ENCODE measurements at regions of chr17 and their contacts with region 1.

Region 1: DNA sequence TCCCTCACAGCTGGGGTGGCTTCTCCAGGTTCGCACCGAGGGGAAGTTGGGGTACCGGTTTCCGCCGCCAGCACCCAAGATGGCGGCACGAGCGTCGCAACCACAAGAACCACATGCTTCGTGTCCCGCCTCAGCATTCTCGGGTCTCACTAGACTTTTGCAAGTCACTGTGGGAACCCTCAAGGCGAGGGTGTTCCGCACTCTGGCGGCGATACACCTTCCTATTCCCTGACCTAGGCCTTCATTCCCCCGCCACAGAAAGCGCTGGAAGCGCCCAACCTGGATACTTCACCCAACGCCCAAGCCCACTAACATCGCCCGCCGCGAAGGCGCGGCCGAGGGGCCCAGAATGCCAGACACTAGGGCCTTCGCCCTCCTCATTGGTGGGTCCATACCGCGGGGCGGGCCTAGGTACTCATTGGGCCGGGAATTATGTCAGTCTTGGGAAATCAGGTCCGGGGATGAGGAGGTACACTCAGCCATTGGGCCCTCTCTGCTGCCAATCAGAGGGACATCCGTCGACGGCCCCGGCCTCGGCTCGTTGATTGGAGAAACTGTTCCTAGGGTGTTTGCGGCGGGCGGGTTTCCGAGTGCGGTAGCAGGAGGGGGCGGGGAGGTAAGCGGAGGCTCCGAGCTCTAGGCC is at the start of gene NFE2L1:
- DNase-seq: peak; percentile 98
- H3K27ac ChIP-seq: peak within 1 kb of the TSS; percentile 99
- CTCF ChIP-seq: no peak

Region 2: GRCh38 chr17:47905221-47905781 is 142.6 kb before region 1 on chr17:
- CTCF ChIA-PET with region 1: no interaction called
- POLR2A ChIA-PET with region 1: no interaction called
- DNase-seq: no peak
- H3K27ac ChIP-seq: peak overlapping the region; percentile 93
- CTCF ChIP-seq: no peak

Region 3: DNA sequence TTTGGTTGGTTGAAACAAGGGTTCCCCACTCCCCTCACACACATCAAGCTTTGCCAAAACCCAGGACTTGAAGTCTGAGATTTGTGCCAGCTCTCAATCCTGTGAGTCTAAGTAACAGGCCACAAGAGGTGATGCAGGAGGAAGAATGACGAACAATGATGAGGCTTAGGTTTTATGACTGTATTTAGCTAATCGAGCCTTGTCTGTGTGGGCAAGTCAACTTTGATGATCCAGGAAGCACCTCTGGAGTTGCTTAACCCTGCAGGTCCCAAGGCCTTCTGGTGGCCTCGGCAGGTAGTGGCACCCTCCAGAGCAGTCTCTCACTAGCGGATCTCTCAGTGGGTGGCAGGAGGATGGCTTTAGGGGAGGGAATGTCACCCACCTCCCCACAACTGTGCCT is 48.3 kb before region 1 on chr17:
- CTCF ChIA-PET with region 1: no interaction called
- POLR2A ChIA-PET with region 1: no interaction called
- DNase-seq: peak; percentile 14
- H3K27ac ChIP-seq: no peak overlapping the region; the same call in 1 of the 2 replicates
- CTCF ChIP-seq: no peak

Region 4: DNA sequence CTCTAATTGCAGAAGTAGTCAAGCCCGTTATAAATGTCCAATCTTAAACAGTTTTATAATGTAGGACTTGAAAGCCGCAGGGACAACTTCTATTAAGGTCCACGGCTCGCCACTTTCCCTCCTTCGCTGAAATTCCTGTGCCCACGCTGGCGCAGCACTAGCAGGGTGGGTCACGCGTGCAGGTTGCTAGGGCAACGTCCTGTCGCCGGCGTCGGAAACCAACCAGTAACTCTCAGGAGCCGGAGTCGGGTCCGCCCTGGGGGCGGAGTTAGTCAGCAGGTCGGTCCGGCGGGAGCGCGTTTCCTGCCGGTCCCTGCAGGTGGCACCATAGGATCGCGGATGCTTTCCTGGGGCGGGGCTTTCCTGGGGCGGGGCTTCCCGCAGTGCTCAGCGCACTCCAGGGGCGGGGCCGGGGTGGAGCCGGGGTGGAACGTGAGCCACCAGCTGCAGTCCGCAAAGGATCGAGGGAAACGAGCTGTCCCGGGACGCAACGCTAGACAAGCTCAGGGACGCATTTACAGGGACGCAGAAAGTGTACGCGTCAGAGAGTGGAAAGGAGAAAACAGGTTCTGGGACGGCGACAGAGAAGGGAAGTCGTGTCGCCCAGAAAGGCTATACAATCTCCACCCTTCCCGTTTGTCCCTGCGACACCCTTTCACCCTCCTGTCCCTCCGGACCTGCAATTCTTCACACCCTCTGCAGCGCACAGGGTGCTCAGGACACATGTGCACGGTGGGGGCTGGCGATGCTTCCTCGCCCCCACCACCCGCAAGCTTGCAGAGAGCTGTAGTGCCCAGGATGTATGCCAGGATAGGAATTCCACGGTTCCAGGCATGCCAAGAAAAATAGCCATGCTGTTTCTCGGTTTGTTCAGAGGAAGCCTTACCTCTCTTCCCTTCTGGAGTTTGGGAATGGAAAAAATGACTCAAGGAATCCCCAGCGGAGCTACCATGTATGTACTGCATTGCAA is 22.6 kb before region 1 on chr17:
- CTCF ChIA-PET with region 1: interaction called, 20 read pairs
- POLR2A ChIA-PET with region 1: interaction called, 10 read pairs
- DNase-seq: peak; percentile 94
- H3K27ac ChIP-seq: peak overlapping the region; percentile 98
- CTCF ChIP-seq: peak; percentile 93

Region 5: GRCh38 chr17:48037036-48037837 is 10.6 kb before region 1 on chr17 and contains the start of gene COPZ2:
- CTCF ChIA-PET with region 1: interaction called, 11 read pairs
- POLR2A ChIA-PET with region 1: interaction called, 5 read pairs
- DNase-seq: no peak
- H3K27ac ChIP-seq: peak within 1 kb of the TSS; percentile 77
- CTCF ChIP-seq: no peak; the same call in 1 of the 2 replicates

Region 6: DNA sequence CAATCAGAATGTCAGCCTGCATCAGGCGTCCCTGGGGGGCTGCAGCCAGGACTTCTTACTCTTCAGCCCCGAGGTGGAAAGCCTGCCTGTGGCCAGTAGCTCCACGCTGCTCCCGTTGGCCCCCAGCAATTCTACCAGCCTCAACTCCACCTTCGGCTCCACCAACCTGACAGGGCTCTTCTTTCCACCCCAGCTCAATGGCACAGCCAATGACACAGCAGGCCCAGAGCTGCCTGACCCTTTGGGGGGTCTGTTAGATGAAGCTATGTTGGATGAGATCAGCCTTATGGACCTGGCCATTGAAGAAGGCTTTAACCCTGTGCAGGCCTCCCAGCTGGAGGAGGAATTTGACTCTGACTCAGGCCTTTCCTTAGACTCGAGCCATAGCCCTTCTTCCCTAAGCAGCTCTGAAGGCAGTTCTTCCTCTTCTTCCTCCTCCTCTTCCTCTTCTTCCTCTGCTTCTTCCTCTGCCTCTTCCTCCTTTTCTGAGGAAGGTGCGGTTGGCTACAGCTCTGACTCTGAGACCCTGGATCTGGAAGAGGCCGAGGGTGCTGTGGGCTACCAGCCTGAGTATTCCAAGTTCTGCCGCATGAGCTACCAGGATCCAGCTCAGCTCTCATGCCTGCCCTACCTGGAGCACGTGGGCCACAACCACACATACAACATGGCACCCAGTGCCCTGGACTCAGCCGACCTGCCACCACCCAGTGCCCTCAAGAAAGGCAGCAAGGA is 10.7 kb after region 1 on chr17:
- CTCF ChIA-PET with region 1: interaction called, 4 read pairs
- POLR2A ChIA-PET with region 1: interaction called, 10 read pairs
- DNase-seq: no peak
- H3K27ac ChIP-seq: peak overlapping the region; percentile 99
- CTCF ChIP-seq: no peak

Region 7: DNA sequence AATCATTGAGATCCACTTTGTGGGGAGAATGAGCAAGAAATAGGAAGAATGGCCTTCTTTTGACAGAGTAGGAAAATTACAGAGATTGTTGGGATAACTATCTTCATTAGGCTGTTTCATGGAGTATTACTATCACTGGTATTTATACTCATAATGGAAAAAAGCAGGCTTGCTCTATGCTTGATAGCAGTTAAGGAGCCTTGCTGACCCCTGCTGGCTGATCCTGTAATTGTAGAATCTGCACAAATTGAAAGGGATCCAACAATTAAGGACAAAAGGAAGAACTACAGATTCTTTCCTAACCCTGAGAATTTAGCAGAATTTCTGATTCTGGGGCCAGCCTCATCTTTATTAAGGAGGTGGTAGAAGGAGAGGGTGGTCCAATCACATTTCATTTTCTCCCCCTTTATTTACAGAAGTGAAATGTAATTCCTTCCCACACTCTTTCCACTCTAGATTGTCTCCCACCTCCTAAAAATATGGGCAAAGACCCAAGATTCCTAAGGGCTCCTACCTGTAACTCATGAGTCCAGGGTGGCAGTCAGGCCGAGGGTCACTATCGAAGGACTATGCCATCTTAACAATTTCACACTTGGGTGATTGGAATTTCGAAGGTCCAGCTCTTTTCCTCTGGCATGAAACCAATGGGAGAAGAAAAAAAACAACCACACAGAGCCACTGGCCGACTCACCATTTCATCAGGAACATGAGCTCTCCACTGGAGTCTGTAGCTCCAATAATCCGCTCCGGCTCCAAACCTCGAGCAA is 26.6 kb after region 1 on chr17:
- CTCF ChIA-PET with region 1: interaction called, 3 read pairs
- POLR2A ChIA-PET with region 1: interaction called, 16 read pairs
- DNase-seq: peak; percentile 53
- H3K27ac ChIP-seq: peak overlapping the region; percentile 61
- CTCF ChIP-seq: peak; percentile 86